IMR-90 (cell line): ENCODE measurements at regions of chr17 and their contacts with region 1.

Region 1: DNA sequence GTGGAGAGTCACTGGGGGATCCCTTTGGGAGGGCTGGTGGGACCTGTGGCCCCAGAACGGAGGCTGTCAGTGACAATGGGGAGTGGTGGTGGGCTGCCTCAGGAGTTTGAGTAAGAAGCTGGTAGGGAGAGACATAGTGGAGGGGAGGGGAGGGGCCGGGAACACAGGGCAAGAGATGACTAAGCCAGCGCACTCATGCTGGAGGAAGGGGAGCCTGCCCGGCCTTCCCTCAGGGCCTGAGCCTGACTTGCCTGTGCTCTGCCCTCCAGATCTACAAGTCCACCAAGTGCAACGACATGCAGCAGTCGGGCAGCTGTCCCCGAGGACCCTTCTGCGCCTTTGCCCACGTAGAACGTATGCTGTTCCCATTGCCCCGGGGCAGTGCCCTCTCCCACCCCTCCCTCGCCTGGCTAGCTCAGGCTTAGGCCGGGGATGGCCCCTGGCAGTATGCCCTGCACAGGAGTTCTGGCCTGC is 29.3 kb downstream of the UNC13D start:
- DNase-seq: peak; percentile 79
- ATAC-seq: peak; percentile 99
- H3K4me3 ChIP-seq: no peak overlapping the region
- H3K27ac ChIP-seq: peak overlapping the region; percentile 82
- H3K4me1 ChIP-seq: peaks cover 7% of the 10 kb centered on the region
- H3K27me3 ChIP-seq: no peaks in the 10 kb centered on the region
- CTCF ChIP-seq: no peak
- POLR2A ChIP-seq: no peak
- RAD21 ChIP-seq: no peak

Region 2: DNA sequence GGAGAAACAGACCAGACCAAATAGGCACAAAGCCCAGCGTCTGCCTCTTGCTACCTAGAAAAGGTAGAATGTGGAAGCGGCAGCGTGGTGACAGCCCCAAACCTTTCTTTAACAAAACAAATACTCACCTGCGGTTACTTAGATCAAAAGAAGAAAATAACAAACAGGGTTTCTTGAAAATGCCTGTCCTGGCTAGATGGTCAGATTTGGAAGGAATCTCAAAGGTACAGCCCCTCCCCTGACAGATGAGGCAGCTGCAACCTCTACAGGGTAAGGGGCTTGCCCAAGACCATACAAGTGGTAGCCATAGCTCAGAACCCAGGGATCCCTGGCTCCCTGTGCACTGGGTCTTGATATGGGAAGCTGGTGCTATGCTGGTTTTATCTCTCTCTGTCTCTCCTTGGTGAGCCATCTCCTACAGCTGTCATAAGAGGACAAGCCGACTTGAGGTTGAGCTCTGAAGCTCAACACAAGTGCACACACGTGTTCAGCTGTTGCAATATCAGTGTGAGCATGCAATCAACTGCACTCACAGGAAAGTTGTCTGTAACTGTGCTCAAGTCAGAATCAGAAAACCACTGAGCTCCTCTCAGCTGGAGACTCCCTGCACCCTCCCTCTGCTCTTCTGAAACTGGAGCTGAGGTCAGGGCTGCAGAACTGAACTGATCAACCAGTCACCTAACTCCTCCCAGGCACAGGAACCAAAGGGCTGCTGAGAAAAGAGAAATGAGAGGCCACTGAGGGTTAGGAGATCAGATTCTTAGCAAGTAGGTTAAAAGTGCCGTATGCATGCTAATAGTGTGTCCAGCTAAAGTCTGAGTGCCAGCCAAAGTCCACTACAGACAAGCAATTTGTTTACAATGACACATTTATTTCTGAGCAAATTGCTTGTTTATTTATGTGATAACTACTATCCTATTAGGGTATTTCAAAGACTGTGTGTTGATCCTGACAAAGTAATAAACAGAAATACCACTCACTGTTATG is 431.4 kb after region 1 on chr17:
- CTCF ChIA-PET with region 1: no interaction called
- POLR2A ChIA-PET with region 1: interaction called, 10 read pairs
- dilution Hi-C with region 1: no loop called
- in situ Hi-C with region 1: no loop called
- intact Hi-C with region 1: no loop called
- DNase-seq: peak; percentile 53
- ATAC-seq: peak; percentile 63
- H3K4me3 ChIP-seq: no peak overlapping the region
- H3K27ac ChIP-seq: no peak overlapping the region
- H3K4me1 ChIP-seq: 0 out of 2 replicates have a peak, but pooled peaks cover 1% of the 10 kb centered on the region
- H3K27me3 ChIP-seq: peaks cover 14% of the 10 kb centered on the region
- CTCF ChIP-seq: no peak
- POLR2A ChIP-seq: no peak
- RAD21 ChIP-seq: no peak